ENCODE measurements at regions of chr7 and their contacts with region 1.

Region 1: DNA sequence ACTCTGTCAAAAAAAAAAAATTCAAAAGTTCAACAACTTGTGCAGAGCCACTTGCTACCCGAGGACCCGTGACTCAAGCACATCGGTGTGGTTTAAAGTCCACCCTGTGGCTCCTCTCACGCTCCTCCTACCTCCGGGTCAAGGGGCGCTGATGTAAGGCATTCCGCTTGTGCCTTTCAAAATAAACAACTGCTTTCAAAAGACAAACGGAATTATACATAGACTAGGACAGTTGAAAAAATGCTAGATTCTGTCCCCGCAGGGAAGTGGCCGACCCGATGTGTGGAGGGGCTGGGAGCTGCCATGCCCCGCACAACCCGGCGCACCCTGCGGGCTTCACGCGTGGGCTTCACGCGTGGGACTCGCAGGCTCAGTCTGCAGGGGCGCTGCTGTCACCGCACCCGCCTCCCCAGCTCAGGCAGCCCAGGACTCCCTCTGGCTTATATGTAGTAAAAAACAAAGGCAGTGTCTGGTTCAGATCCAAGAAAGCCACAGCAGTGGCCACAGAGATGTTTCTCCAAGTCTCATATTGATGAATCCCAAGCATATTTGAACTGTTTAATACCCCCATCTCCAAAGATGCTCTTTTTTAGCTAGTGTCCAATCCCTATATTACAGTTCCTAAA is 239.7 kb upstream of the INHBA start:
- DNase-seq: peak in 1 of 35 experiments; percentile 2
- ATAC-seq: no peak
- H3K4me3 ChIP-seq: no peak overlapping the region
- H3K4me3 Mint-ChIP-seq: peak overlapping the region in 1 of 3 donors; percentile 33
- H3K27ac ChIP-seq: no peak overlapping the region
- H3K27ac Mint-ChIP-seq: no peak overlapping the region
- H3K4me1 ChIP-seq: peaks cover 0 to 7% of the 10 kb centered on the region in 2 experiments
- H3K4me1 Mint-ChIP-seq: peaks cover 7 to 10% (median 10%) of the 10 kb centered on the region in 3 donors
- H3K27me3 ChIP-seq: peaks cover 0 to 27% of the 10 kb centered on the region in 2 experiments
- H3K27me3 Mint-ChIP-seq: peaks cover 21 to 25% of the 10 kb centered on the region in 2 donors

Region 2: GRCh38 chr7:41792120-41792519 is 150.5 kb before region 1 on chr7:
- CTCF ChIA-PET with region 1: no interaction called
- POLR2A ChIA-PET with region 1: no interaction called
- DNase-seq: no peak
- ATAC-seq: no peak
- H3K4me3 ChIP-seq: no peak overlapping the region
- H3K4me3 Mint-ChIP-seq: no peak overlapping the region
- H3K27ac ChIP-seq: no peak overlapping the region
- H3K27ac Mint-ChIP-seq: no peak overlapping the region
- H3K4me1 ChIP-seq: no peaks in the 10 kb centered on the region
- H3K4me1 Mint-ChIP-seq: no peaks in the 10 kb centered on the region
- H3K27me3 ChIP-seq: peaks cover 0 to 2% of the 10 kb centered on the region in 2 experiments
- H3K27me3 Mint-ChIP-seq: no peaks in the 10 kb centered on the region

Region 3: GRCh38 chr7:41809940-41810576 is 132.5 kb before region 1 on chr7:
- CTCF ChIA-PET with region 1: no interaction called
- POLR2A ChIA-PET with region 1: no interaction called
- DNase-seq: no peak
- ATAC-seq: no peak
- H3K4me3 ChIP-seq: no peak overlapping the region
- H3K4me3 Mint-ChIP-seq: no peak overlapping the region
- H3K27ac ChIP-seq: no peak overlapping the region
- H3K27ac Mint-ChIP-seq: no peak overlapping the region
- H3K4me1 ChIP-seq: no peaks in the 10 kb centered on the region
- H3K4me1 Mint-ChIP-seq: peaks cover 0 to 3% (median 0%) of the 10 kb centered on the region in 3 donors
- H3K27me3 ChIP-seq: no peaks in the 10 kb centered on the region
- H3K27me3 Mint-ChIP-seq: no peaks in the 10 kb centered on the region

Region 4: DNA sequence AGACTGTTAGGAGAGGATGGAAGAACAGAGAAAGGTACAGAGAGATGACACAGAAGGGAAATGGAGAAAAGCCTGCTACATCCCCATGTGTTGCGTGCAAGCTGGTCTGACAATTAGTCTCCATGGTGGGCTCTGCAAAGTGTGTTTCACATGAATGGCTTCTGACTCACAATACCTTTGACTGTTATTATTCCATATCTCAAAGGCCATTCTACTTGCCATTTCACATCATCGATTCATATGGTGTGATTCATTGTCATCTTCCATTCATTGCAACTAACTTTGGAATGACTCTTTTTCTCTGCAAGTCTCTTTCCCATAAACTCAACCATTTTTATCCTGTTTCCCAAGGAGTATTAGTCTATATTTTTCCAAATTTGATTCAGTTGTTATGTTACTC is 30.8 kb before region 1 on chr7:
- CTCF ChIA-PET with region 1: interaction called in 1 of 2 experiments, 13 read pairs
- POLR2A ChIA-PET with region 1: no interaction called
- DNase-seq: no peak
- ATAC-seq: no peak
- H3K4me3 ChIP-seq: no peak overlapping the region
- H3K4me3 Mint-ChIP-seq: no peak overlapping the region
- H3K27ac ChIP-seq: no peak overlapping the region
- H3K27ac Mint-ChIP-seq: no peak overlapping the region
- H3K4me1 ChIP-seq: no peaks in the 10 kb centered on the region
- H3K4me1 Mint-ChIP-seq: no peaks in the 10 kb centered on the region
- H3K27me3 ChIP-seq: no peaks in the 10 kb centered on the region
- H3K27me3 Mint-ChIP-seq: peaks cover 0 to 4% of the 10 kb centered on the region in 2 donors

Measured in T-cell (primary cell).